ENCODE measurements at regions of chr13 and their contacts with region 1.

Region 1: DNA sequence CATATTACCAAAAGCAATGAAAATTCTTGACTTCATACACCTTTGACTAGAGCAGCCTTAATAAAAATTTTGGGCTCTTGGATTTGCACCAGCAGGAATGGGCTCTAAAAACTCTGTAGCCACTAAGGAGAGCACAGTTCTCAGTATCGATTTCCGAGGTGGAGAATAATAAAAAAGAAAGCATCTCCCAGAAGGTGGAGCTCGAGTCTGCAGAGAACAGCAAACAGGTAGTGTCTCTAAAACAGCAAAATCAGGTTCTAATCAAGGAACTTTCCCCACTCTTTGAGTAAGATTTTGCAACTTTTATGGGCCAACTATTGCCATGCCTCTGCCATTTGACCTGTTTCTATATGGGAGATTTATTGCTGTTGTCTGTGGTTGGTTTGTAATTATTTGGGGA is 258.7 kb upstream of the GPC6 start:
- DNase-seq: peak; percentile 9
- H3K4me3 ChIP-seq: no peak overlapping the region
- H3K27ac ChIP-seq: no peak overlapping the region
- H3K4me1 ChIP-seq: no peaks in the 10 kb centered on the region
- H3K27me3 ChIP-seq: no peaks in the 10 kb centered on the region
- CTCF ChIP-seq: peak; percentile 21 to 56

Region 2: DNA sequence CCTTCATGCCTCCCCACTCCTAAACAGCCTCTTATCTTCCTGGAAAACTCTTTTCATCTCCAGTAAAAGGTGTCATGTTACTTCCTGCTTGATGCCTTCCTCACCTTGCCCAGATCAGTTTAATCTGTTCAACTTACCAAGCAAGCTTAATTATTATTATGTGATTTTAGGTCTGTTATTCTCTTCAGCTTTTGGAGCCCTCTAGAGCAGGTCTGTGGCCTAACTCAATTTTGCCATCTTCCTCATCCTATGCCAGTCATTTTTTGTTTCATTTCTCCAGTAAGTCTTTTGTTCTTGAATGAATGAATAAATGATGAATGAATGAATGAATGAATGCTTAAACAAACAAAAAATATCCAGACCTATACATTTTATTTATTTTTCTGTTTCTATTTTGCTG is 983.2 kb after region 1 on chr13:
- CTCF ChIA-PET with region 1: no interaction called
- dilution Hi-C with region 1: no loop called
- in situ Hi-C with region 1: no loop called
- intact Hi-C with region 1: loop called (anchors 10 kb)
- DNase-seq: no peak
- H3K4me3 ChIP-seq: no peak overlapping the region
- H3K27ac ChIP-seq: no peak overlapping the region
- H3K4me1 ChIP-seq: no peaks in the 10 kb centered on the region
- H3K27me3 ChIP-seq: no peaks in the 10 kb centered on the region
- CTCF ChIP-seq: peak in 1 of 2 donors; percentile 7

Region 3: GRCh38 chr13:94192431-94192975 is 1224.6 kb after region 1 on chr13:
- CTCF ChIA-PET with region 1: no interaction called
- dilution Hi-C with region 1: no loop called
- in situ Hi-C with region 1: no loop called
- intact Hi-C with region 1: loop called (anchors 5 kb)
- DNase-seq: peak; percentile 12
- H3K4me3 ChIP-seq: no peak overlapping the region
- H3K27ac ChIP-seq: no peak overlapping the region
- H3K4me1 ChIP-seq: peaks cover 14% of the 10 kb centered on the region
- H3K27me3 ChIP-seq: no peaks in the 10 kb centered on the region
- CTCF ChIP-seq: peak; percentile 22 to 53

Region 4: GRCh38 chr13:94362411-94362909 is 1394.5 kb after region 1 on chr13:
- CTCF ChIA-PET with region 1: no interaction called
- dilution Hi-C with region 1: no loop called
- in situ Hi-C with region 1: no loop called
- intact Hi-C with region 1: loop called (anchors 1 kb)
- DNase-seq: peak; percentile 67
- H3K4me3 ChIP-seq: no peak overlapping the region
- H3K27ac ChIP-seq: no peak overlapping the region
- H3K4me1 ChIP-seq: no peaks in the 10 kb centered on the region
- H3K27me3 ChIP-seq: no peaks in the 10 kb centered on the region
- CTCF ChIP-seq: peak; percentile 84 to 91